A549 (cell line): ENCODE measurements at regions of chr16 and their contacts with region 1.

Region 1: DNA sequence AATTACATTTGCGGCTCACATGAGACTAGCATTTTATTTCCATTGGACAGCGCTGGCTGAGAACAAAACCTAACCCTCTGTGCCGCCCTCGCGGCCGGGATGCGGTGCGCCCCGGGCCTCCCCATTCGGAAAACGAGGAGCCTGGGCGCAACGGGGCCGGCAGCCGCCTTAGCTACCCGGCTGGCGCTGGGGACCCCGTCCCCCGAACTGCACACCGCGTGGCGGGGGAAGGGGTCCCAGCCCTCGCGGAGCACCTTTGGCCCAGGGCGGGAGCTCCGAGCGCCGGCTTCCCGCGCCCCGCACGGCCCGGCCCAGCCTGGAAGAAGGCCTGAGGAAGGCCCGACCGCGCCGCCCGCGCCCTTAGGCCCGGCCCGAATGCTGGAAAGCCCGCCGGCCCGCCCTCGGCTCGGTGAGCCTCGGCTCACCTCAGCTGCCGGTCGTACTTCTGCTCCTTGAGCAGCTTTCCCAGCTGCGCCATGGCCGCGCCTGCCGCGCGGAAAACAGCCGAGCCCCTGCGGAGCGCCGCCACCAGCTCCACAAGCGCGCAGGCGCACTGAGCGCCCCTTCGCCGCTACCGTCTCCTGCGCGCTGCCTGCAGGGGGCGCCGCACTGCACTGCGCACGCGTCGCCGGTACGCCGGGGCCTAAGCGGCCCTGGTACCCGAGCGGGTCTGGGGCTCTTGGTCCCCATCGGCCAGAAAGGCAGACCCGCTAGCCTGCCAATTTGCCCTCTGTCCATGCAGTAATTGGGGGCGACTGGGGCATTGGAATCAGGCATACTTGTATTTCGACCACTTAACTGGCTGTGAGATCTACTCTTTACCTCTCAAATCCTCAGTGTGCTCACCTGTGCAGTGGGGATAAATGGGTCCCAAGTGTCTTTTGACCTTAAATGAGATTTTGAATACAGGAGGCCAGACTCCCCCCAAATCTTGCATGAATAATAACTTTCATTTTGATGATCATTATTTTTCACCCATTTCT is at the start of gene NAE1:
- DNase-seq: peak; percentile 84 to 91
- ATAC-seq: peak; percentile 92 to 98
- H3K4me3 ChIP-seq: peak within 1 kb of the TSS; percentile 88
- H3K27ac ChIP-seq: peak within 1 kb of the TSS; percentile 96 to 97
- H3K4me1 ChIP-seq: peaks cover 10% of the 10 kb centered on the region
- CTCF ChIP-seq: peak; percentile 97
- EP300 ChIP-seq: no peak
- POLR2A ChIP-seq: peak; percentile 90
- RAD21 ChIP-seq: peak; percentile 29 to 47; a peak in 3 of 5 replicates
- polyA plus RNA-seq, gene NAE1: 89.8 and 132 TPM in 2 replicates

Region 2: DNA sequence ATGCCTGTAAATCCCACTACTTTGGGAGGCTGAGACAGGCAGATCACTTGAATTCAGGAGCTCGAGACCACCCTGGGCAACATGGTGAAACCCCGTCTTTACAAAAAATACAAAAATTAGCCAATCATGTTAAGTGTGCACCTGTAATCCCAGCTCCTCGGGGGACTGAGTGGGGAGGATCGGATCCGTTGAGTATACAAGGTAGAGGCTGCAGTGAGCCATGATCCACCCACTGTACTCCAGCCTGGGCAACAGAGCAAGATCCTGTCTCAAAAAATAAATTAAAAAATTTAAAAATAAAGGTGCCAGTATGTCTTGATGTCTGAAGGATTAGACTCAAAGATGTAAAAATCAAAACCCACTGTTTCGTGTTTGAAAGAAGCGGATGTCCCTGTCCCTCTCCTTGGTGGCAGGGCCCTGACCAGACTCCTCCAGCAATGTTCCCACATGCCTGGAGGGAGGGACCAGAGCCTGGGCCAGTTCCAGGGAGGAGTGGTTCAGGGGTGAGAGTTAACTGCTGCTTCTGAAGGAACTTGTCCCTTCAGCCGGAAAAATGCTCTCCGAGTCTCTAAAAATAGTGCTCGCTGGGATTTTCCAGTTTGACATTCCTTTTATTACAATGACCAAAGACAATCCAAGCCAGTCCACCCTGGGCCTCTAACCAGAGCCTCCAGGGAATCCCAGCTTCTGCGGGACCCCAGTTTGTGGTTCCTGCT is 124.8 kb before region 1 on chr16:
- CTCF ChIA-PET with region 1: no interaction called
- POLR2A ChIA-PET with region 1: no interaction called
- DNase-seq: no peak
- ATAC-seq: no peak
- H3K4me3 ChIP-seq: no peak overlapping the region
- H3K27ac ChIP-seq: no peak overlapping the region
- H3K4me1 ChIP-seq: no peaks in the 10 kb centered on the region
- CTCF ChIP-seq: no peak
- EP300 ChIP-seq: no peak
- POLR2A ChIP-seq: no peak
- RAD21 ChIP-seq: no peak

Region 3: DNA sequence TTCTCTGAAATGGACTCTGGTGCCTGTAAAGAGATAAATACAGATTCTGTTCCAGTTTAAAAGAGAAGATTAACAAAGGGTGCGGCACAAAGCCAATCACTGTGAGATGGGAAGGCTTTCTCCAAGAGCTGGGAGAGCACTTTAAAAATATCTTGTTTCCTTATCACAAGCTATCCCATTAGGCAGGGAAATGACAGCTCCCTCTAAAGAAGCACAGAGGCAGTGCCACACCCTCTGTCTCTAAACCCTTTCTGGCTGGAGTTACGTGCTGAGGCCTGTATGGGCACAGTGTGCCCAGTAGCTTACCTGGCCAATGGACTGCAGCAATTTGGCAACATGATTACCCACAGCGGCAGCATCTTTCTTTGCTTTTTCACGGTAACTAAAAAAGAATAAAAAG is 20.3 kb before region 1 on chr16:
- CTCF ChIA-PET with region 1: interaction called, 41 read pairs
- POLR2A ChIA-PET with region 1: interaction called, 3 read pairs
- DNase-seq: no peak
- ATAC-seq: peak; percentile 47 to 65; a peak in 3 of 6 replicates
- H3K4me3 ChIP-seq: no peak overlapping the region
- H3K27ac ChIP-seq: no peak overlapping the region
- H3K4me1 ChIP-seq: no peaks in the 10 kb centered on the region
- CTCF ChIP-seq: no peak
- EP300 ChIP-seq: no peak
- POLR2A ChIP-seq: no peak
- RAD21 ChIP-seq: no peak

Region 4: GRCh38 chr16:66844342-66845079 is 13.8 kb after region 1 on chr16 and contains the start of gene CA7:
- CTCF ChIA-PET with region 1: interaction called, 103 read pairs
- POLR2A ChIA-PET with region 1: interaction called, 3 read pairs
- DNase-seq: no peak
- ATAC-seq: peak in 1 of 2 experiments; percentile 20; a peak in 2 of 6 replicates
- H3K4me3 ChIP-seq: peak within 1 kb of the TSS; percentile 37
- H3K27ac ChIP-seq: peak within 1 kb of the TSS in 1 of 2 experiments; percentile 49; a peak in 3 of 6 replicates
- H3K4me1 ChIP-seq: peaks cover 3% of the 10 kb centered on the region; the same call in 1 of the 3 replicates
- CTCF ChIP-seq: no peak
- EP300 ChIP-seq: no peak
- POLR2A ChIP-seq: no peak
- RAD21 ChIP-seq: no peak
- polyA plus RNA-seq, gene CA7: not detected in 2 replicates

Region 5: GRCh38 chr16:66858740-66859396 is 28.2 kb after region 1 on chr16:
- CTCF ChIA-PET with region 1: interaction called, 103 read pairs
- POLR2A ChIA-PET with region 1: no interaction called
- DNase-seq: peak in 1 of 2 experiments; percentile 47
- ATAC-seq: peak; percentile 70 to 78
- H3K4me3 ChIP-seq: no peak overlapping the region
- H3K27ac ChIP-seq: peak overlapping the region in 1 of 2 experiments; percentile 25; a peak in 1 of 6 replicates
- H3K4me1 ChIP-seq: peaks cover 9% of the 10 kb centered on the region; the same call in 1 of the 3 replicates
- CTCF ChIP-seq: no peak
- EP300 ChIP-seq: no peak
- POLR2A ChIP-seq: no peak
- RAD21 ChIP-seq: no peak

Region 6: GRCh38 chr16:66880288-66881013 is 49.7 kb after region 1 on chr16 and contains the start of gene PDP2:
- CTCF ChIA-PET with region 1: interaction called, 12 read pairs
- POLR2A ChIA-PET with region 1: interaction called, 3 read pairs
- DNase-seq: peak; percentile 89 to 96
- ATAC-seq: peak; percentile 98 to 100
- H3K4me3 ChIP-seq: peak within 1 kb of the TSS; percentile 74
- H3K27ac ChIP-seq: peak within 1 kb of the TSS; percentile 76 to 88
- H3K4me1 ChIP-seq: peaks cover 6% of the 10 kb centered on the region; the same call in 1 of the 3 replicates
- CTCF ChIP-seq: no peak
- EP300 ChIP-seq: no peak
- POLR2A ChIP-seq: peak; percentile 70
- RAD21 ChIP-seq: no peak
- polyA plus RNA-seq, gene PDP2: 10.0 and 10.7 TPM in 2 replicates